ENCODE measurements at regions of chr2 and their contacts with region 1.

Region 1: DNA sequence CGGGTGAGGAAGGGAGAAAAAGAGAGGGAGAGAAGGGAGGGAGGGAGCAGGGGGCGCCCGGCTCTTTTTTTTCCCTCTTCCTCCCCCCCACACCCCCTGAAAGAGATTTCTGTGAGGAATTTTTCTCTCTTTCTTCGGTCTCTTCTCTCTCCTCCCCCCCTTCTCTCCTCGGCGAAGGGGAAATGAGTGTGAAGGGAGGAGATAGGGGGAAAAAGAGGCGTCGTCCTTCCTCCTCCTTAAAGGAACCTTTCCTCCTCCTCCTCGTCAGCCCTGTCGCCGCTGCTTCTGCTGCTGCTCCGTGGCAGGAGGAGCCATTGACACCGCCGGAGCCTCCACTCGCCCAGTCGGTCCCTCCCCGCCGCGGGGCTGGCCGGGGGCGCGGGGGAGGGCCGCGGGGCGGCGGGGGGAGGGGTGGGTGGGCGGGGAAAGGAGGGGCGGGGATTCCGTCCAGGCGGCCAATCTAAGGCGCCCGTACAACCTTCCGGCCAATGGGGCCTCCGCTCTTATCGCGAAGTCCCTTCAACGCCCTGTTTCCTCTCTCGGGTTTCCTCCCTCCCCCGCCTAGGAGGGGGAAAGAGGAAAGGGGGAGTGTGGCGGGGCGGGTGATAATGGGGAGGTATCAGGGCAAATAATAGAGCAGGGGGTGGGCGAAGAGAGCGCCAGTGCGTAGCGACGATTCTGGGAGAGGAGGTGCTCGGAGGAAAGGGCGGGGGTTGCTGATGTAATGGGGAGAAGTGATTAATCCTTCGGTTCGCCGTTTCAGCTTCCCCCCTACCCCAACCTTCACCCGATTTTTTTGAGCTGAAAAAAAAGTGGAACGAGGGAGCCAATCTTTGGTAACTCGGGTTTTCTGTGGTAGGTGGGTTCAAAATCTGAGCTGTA is at the start of gene FBXO11:
- DNase-seq: peak; percentile 98
- H3K4me3 ChIP-seq: peak within 1 kb of the TSS; percentile 83
- H3K27ac ChIP-seq: peak within 1 kb of the TSS; percentile 98
- H3K27me3 ChIP-seq: no peaks in the 10 kb centered on the region
- CTCF ChIP-seq: no peak
- polyA plus RNA-seq, gene FBXO11: 55.9 and 65.8 TPM in 2 replicates

Region 2: GRCh38 chr2:47888581-47889280 is 17.7 kb before region 1 on chr2:
- CTCF ChIA-PET with region 1: interaction called, 3 read pairs
- POLR2A ChIA-PET with region 1: interaction called, 12 read pairs
- DNase-seq: no peak
- H3K4me3 ChIP-seq: no peak overlapping the region
- H3K27ac ChIP-seq: no peak overlapping the region
- H3K27me3 ChIP-seq: no peaks in the 10 kb centered on the region
- CTCF ChIP-seq: no peak

Region 3: GRCh38 chr2:47917276-47917961 is 11.0 kb after region 1 on chr2:
- CTCF ChIA-PET with region 1: interaction called, 11 read pairs
- POLR2A ChIA-PET with region 1: no interaction called
- DNase-seq: no peak
- H3K4me3 ChIP-seq: no peak overlapping the region
- H3K27ac ChIP-seq: no peak overlapping the region
- H3K27me3 ChIP-seq: peaks cover 2% of the 10 kb centered on the region
- CTCF ChIP-seq: no peak

Region 4: DNA sequence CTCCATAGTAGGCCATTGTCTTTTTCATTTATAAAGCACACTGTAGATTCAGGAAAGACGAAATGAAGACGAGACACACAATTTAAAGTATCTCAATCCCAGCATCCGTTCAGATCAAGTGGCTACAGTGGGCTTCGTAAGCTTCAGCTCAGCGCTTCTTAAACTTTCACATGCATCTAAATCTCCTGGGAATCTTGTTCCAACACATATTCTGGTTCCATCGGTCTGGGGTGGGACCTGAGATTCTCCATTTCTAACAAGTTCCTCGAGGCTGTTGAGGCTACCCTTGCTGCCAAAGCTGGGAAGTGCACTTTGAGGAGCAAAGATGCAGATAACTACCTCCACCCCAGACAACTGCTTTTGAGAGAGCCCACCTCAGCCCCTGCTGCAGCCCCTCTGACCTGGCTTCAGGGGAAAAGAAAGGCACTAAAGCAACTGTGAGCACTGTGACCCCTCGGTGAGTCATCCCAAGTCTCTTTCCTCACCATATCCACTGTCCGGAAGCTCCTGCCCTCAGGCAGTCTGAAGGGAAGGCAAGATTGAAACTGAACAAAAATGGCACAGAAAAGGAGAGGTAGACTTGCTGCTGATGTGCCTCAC is 201.0 kb after region 1 on chr2:
- CTCF ChIA-PET with region 1: interaction called, 12 read pairs
- POLR2A ChIA-PET with region 1: interaction called, 4 read pairs
- DNase-seq: no peak
- H3K4me3 ChIP-seq: no peak overlapping the region
- H3K27ac ChIP-seq: peak overlapping the region; percentile 91
- H3K27me3 ChIP-seq: no peaks in the 10 kb centered on the region
- CTCF ChIP-seq: peak; percentile 42

Measured in AG04450 (cell line).